WTC11 (cell line): ENCODE measurements at regions of chr2 and their contacts with region 1.

Region 1: GRCh38 chr2:177164584-177165052 is 48.0 kb upstream of the HNRNPA3 start:
- DNase-seq: peak; percentile 85
- ATAC-seq: peak; percentile 83
- H3K4me3 Mint-ChIP-seq: no peak overlapping the region
- H3K27ac Mint-ChIP-seq: no peak overlapping the region
- H3K4me1 Mint-ChIP-seq: peaks cover 19% of the 10 kb centered on the region
- H3K27me3 Mint-ChIP-seq: no peaks in the 10 kb centered on the region
- CTCF ChIP-seq: peak; percentile 92

Region 2: GRCh38 chr2:177180269-177181000 is 15.8 kb after region 1 on chr2:
- CTCF ChIA-PET with region 1: interaction called, 22 read pairs
- POLR2A ChIA-PET with region 1: interaction called, 5 read pairs
- DNase-seq: no peak
- ATAC-seq: no peak
- H3K4me3 Mint-ChIP-seq: no peak overlapping the region
- H3K27ac Mint-ChIP-seq: no peak overlapping the region
- H3K4me1 Mint-ChIP-seq: peaks cover 18% of the 10 kb centered on the region
- H3K27me3 Mint-ChIP-seq: peaks cover 2% of the 10 kb centered on the region; the same call in 1 of the 2 replicates
- CTCF ChIP-seq: no peak

Region 3: DNA sequence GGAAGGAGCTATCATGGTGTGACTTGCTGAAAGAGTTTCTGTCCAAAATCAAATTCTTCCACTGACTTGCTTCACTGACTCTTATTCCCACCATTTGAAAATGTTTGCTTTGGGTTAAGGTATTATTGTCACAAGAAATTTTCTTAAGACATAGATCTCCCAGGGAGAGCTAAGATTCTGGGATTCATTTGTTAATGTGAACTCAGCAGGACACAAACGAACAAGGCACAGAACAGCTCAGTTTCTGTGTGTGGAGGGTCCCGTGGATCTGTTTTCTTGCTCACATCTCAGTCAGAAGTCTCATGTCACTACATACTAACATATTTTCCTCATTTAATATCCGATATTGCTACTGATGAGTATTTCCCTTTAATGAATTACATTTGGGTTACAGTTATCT is 39.8 kb after region 1 on chr2:
- CTCF ChIA-PET with region 1: interaction called, 67 read pairs
- POLR2A ChIA-PET with region 1: no interaction called
- DNase-seq: no peak
- ATAC-seq: peak; percentile 80
- H3K4me3 Mint-ChIP-seq: no peak overlapping the region
- H3K27ac Mint-ChIP-seq: peak overlapping the region; percentile 21
- H3K4me1 Mint-ChIP-seq: peaks cover 26% of the 10 kb centered on the region
- H3K27me3 Mint-ChIP-seq: peaks cover 46% of the 10 kb centered on the region
- CTCF ChIP-seq: no peak

Region 4: DNA sequence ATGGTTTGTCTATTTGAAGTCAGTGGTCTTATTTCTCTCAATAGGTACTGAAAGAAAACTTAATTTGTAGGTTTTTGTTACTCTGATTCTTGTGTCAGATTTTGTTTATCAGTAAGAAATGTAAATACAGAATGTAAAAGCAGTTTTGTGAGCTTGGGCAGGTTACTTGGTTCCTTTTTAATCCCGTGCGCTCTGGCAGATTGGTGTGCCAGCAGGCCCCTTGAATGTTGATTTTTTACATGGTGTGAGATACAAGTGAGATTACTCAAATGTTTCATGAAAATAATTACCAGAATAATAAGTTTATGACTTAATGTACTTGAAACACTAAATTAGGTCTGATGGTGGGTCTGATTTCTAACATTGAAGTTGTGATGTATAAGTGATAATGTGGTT is 61.3 kb after region 1 on chr2:
- CTCF ChIA-PET with region 1: interaction called, 23 read pairs
- POLR2A ChIA-PET with region 1: interaction called, 4 read pairs
- DNase-seq: no peak
- ATAC-seq: no peak
- H3K4me3 Mint-ChIP-seq: no peak overlapping the region
- H3K27ac Mint-ChIP-seq: peak overlapping the region; percentile 75
- H3K4me1 Mint-ChIP-seq: peaks cover 16% of the 10 kb centered on the region
- H3K27me3 Mint-ChIP-seq: no peaks in the 10 kb centered on the region
- CTCF ChIP-seq: no peak

Region 5: DNA sequence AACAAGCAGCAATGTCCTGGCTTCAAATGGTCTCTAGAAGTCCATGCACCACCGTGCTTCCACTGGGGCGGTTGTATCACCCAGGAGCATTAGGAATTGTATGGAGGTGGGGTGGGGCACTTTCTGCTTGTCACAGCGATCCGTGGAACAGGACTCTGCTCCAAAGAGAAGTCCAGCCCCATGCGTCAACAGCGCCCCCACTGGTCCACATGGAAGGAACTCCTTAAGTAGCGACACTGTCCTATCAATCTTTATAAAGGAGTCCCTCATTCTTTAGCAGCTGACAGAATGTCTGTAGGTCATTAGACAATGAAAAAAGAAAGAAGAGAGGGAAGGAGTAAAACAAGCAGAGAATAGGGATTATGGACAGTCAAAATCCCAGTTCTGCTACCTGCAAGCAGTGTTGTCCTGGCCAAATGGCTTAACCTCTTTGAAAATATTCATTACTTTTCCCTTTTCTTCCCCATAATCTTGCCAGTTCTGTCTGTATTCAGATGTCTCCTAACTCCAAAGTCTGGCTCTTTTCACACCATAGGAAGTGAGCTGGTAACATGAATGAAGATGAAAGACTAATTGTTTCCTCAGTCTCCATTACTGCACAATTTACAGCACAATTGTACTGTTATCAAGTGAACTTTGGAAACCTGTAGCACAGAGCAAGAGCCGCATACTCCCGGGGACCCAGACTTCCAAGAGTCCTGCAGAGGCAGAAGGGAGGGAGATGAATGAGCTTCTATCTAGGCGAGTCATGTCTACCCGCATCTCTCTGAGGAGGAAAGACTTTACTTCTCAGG is 90.0 kb after region 1 on chr2:
- CTCF ChIA-PET with region 1: interaction called, 11 read pairs
- POLR2A ChIA-PET with region 1: no interaction called
- DNase-seq: peak; percentile 86
- ATAC-seq: peak; percentile 94
- H3K4me3 Mint-ChIP-seq: no peak overlapping the region
- H3K27ac Mint-ChIP-seq: peak overlapping the region; percentile 86
- H3K4me1 Mint-ChIP-seq: peaks cover 55% of the 10 kb centered on the region
- H3K27me3 Mint-ChIP-seq: no peaks in the 10 kb centered on the region
- CTCF ChIP-seq: peak; percentile 90

Region 6: DNA sequence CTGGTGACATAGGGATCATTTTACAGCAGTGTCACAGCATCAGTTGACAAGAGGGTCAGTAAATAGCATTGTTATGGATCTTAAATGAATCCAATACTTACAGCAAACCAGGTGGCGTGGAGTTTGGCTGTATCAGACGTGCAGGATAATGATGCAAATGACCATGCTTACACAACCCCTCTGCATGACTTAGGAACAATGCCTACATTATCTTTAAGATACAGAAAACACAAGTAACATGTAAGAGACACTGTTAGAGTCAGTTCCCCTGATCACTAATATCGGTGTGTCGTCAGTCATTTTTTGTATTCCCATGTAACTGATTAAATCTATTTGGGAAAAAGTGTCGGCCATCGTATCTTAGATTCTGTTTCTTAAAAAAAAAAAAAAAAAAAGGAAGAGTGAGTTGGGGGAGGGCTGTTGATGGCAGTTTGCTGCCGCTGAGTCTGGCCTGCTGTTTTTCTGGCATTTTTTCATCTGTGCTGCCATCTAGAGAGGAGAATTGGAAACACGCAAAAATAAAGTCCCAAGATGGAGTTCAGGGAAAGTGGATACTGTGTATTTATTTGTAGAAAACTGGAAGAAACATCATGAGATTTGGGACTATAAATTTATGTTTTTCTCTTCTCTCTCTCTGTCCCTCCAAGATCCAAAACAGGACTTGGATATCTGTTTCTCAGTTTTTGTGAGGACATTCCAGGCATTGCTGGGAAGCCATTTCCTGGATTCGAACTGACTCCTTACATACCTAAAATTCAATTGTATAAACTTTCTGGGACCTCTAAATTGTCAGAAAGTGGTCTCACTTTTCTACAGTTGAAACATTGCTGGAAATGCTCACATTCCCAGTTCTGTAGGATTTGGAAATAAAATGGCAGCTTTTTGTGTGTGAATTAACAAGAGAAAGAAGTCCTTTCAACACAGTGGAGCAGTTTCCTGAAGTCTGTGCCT is 167.7 kb after region 1 on chr2:
- CTCF ChIA-PET with region 1: interaction called, 23 read pairs
- POLR2A ChIA-PET with region 1: interaction called, 3 read pairs
- DNase-seq: no peak
- ATAC-seq: peak; percentile 79
- H3K4me3 Mint-ChIP-seq: no peak overlapping the region; the same call in 1 of the 2 replicates
- H3K27ac Mint-ChIP-seq: peak overlapping the region; percentile 82
- H3K4me1 Mint-ChIP-seq: peaks cover 20% of the 10 kb centered on the region
- H3K27me3 Mint-ChIP-seq: peaks cover 5% of the 10 kb centered on the region
- CTCF ChIP-seq: no peak